ENCODE measurements at regions of chr9 and their contacts with region 1.

Region 1: GRCh38 chr9:99906403-99907207 is at the start of gene STX17:
- DNase-seq: peak; percentile 47 to 95
- H3K4me3 ChIP-seq: peak within 1 kb of the TSS; percentile 92
- CTCF ChIP-seq: no peak
- POLR2A ChIP-seq: peak in 1 of 2 donors; percentile 11
- total RNA-seq, gene STX17: 30.7 to 42.9 (median 34.3) TPM

Region 2: GRCh38 chr9:99819856-99820684 is 86.5 kb before region 1 on chr9:
- intact Hi-C with region 1: loop called (anchors 5 kb)
- DNase-seq: peak; percentile 90 to 99
- H3K4me3 ChIP-seq: peak overlapping the region; percentile 78
- CTCF ChIP-seq: no peak
- POLR2A ChIP-seq: no peak

Measured in lower leg skin (tissue), 4 donors.